B cell (primary cell): ENCODE measurements at regions of chr1 and their contacts with region 1.

Region 1: DNA sequence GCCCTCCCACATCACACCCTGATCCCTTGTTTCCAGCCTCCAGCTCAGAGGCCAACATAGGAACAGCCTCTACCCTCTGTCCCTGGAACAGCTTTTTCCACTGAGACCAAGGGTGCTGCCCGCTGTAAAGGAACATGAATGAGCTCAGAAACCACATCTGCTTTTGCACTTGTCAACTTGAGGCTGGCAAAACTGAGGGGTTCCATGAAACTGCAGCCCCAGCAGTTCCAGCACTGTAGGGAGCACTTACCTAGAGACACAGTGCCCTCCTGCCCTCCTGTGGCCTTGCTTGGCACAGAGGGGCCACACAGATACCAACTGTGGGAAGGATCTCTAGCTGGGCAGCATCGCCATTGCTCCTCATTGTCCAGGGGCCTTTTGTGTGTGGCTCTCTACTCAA is 51.7 kb downstream of the ITPKB start:
- DNase-seq: peak; percentile 73
- ATAC-seq: peak; percentile 44
- H3K4me3 ChIP-seq: no peak overlapping the region
- H3K4me3 Mint-ChIP-seq: peak overlapping the region; percentile 74
- H3K27ac ChIP-seq: no peak overlapping the region
- H3K27ac Mint-ChIP-seq: peak overlapping the region; percentile 91
- H3K4me1 ChIP-seq: peaks cover 78 to 93% of the 10 kb centered on the region in 2 donors
- H3K4me1 Mint-ChIP-seq: peaks cover 97% of the 10 kb centered on the region
- H3K27me3 ChIP-seq: no peaks in the 10 kb centered on the region
- H3K27me3 Mint-ChIP-seq: no peaks in the 10 kb centered on the region
- CTCF ChIP-seq: peak; percentile 52

Region 2: GRCh38 chr1:226626577-226626956 is 60.9 kb before region 1 on chr1:
- CTCF ChIA-PET with region 1: interaction called, 88 read pairs
- POLR2A ChIA-PET with region 1: no interaction called
- intact Hi-C with region 1: loop called (anchors 1 kb)
- DNase-seq: peak; percentile 85
- ATAC-seq: peak; percentile 97
- H3K4me3 ChIP-seq: peak overlapping the region in 4 of 5 experiments; percentile 9 to 46 (median 32)
- H3K4me3 Mint-ChIP-seq: peak overlapping the region; percentile 56
- H3K27ac ChIP-seq: no peak overlapping the region
- H3K27ac Mint-ChIP-seq: peak overlapping the region; percentile 21
- H3K4me1 ChIP-seq: peaks cover 20 to 21% of the 10 kb centered on the region in 2 donors
- H3K4me1 Mint-ChIP-seq: peaks cover 37% of the 10 kb centered on the region
- H3K27me3 ChIP-seq: no peaks in the 10 kb centered on the region
- H3K27me3 Mint-ChIP-seq: no peaks in the 10 kb centered on the region
- CTCF ChIP-seq: peak; percentile 95

Region 3: GRCh38 chr1:226642876-226643576 is 44.4 kb before region 1 on chr1:
- CTCF ChIA-PET with region 1: interaction called, 78 read pairs
- POLR2A ChIA-PET with region 1: interaction called, 4 read pairs
- intact Hi-C with region 1: loop called (anchors 2 kb)
- DNase-seq: peak; percentile 62
- ATAC-seq: peak; percentile 48
- H3K4me3 ChIP-seq: no peak overlapping the region
- H3K4me3 Mint-ChIP-seq: peak overlapping the region; percentile 81
- H3K27ac ChIP-seq: peak overlapping the region; percentile 62 to 68
- H3K27ac Mint-ChIP-seq: peak overlapping the region; percentile 91
- H3K4me1 ChIP-seq: peaks cover 57 to 70% of the 10 kb centered on the region in 2 donors
- H3K4me1 Mint-ChIP-seq: peaks cover 71% of the 10 kb centered on the region
- H3K27me3 ChIP-seq: no peaks in the 10 kb centered on the region
- H3K27me3 Mint-ChIP-seq: no peaks in the 10 kb centered on the region
- CTCF ChIP-seq: no peak

Region 4: GRCh38 chr1:226649780-226650179 is 37.6 kb before region 1 on chr1:
- CTCF ChIA-PET with region 1: interaction called, 78 read pairs
- POLR2A ChIA-PET with region 1: no interaction called
- intact Hi-C with region 1: no loop called
- DNase-seq: no peak
- ATAC-seq: no peak
- H3K4me3 ChIP-seq: no peak overlapping the region
- H3K4me3 Mint-ChIP-seq: no peak overlapping the region
- H3K27ac ChIP-seq: no peak overlapping the region
- H3K27ac Mint-ChIP-seq: peak overlapping the region; percentile 46
- H3K4me1 ChIP-seq: peaks cover 15 to 21% of the 10 kb centered on the region in 2 donors
- H3K4me1 Mint-ChIP-seq: peaks cover 45% of the 10 kb centered on the region
- H3K27me3 ChIP-seq: no peaks in the 10 kb centered on the region
- H3K27me3 Mint-ChIP-seq: no peaks in the 10 kb centered on the region
- CTCF ChIP-seq: peak; percentile 35

Region 5: DNA sequence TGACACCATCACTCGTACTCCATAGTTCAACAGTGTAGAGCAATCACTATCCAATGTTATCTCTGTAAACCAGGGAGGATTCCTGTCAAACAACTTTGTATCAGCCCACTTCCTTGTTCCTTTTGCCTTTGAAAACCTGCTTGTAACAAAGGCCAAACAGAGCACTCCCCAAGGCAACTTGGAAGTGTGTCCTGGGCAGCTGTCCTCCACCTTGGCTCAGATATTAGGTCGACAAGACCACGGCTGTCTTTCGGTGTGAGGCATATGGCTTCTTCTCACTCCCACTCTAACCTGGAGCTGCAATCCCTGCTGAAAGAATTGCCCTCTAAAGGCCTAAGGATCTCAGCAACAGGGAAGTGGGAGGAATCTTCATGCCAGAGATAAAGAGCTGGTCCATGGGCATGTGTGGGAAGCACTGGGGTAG is 15.1 kb before region 1 on chr1:
- CTCF ChIA-PET with region 1: interaction called, 29 read pairs
- POLR2A ChIA-PET with region 1: interaction called, 4 read pairs
- intact Hi-C with region 1: loop called (anchors 1 kb)
- DNase-seq: no peak
- ATAC-seq: no peak
- H3K4me3 ChIP-seq: no peak overlapping the region
- H3K4me3 Mint-ChIP-seq: peak overlapping the region; percentile 94
- H3K27ac ChIP-seq: peak overlapping the region in 1 of 2 donors; percentile 94
- H3K27ac Mint-ChIP-seq: peak overlapping the region; percentile 71
- H3K4me1 ChIP-seq: peaks cover 59 to 73% of the 10 kb centered on the region in 2 donors
- H3K4me1 Mint-ChIP-seq: peaks cover 89% of the 10 kb centered on the region
- H3K27me3 ChIP-seq: no peaks in the 10 kb centered on the region
- H3K27me3 Mint-ChIP-seq: no peaks in the 10 kb centered on the region
- CTCF ChIP-seq: no peak

Region 6: DNA sequence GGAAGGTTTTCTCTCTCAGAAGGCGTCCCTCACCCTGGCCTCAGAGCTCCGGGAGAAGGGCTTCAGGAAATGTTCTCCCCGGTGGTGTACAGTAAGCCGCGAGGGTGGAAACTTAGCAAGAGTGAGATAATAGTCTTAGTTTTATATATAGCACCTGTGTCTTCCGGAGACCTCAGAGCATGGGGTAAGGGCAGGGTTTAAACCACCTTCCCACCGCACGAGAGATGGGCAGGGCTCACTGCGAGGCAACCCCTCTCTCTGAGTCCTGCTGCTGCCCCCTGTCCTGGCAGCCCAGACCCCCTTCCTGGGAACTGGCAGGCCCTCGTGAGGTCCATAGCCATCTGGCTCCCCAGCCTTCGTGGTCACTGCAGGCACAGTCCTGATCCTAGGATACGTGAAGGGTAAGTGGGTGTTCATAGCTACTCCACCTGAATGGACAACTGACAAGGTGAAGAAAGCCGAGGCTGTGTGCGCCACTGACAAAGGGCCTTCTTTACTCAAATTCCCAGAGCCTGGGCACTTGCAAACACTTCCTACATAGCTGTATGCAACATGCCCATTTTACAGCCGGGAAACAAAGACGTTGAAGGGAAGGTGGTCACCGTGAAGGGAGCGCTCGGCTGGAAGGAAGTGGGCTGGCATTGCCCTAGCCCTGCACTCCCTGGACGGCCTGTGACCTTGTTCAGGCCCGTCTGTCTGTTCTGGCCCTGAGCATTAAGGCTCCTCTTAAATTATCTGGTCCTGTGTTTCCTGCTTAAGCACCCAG is 24.7 kb after region 1 on chr1:
- CTCF ChIA-PET with region 1: interaction called, 13 read pairs
- POLR2A ChIA-PET with region 1: no interaction called
- intact Hi-C with region 1: no loop called
- DNase-seq: peak; percentile 50
- ATAC-seq: peak; percentile 75
- H3K4me3 ChIP-seq: peak overlapping the region in 4 of 5 experiments; percentile 18 to 57 (median 22)
- H3K4me3 Mint-ChIP-seq: peak overlapping the region; percentile 56
- H3K27ac ChIP-seq: peak overlapping the region; percentile 70 to 84
- H3K27ac Mint-ChIP-seq: peak overlapping the region; percentile 76
- H3K4me1 ChIP-seq: peaks cover 59 to 73% of the 10 kb centered on the region in 2 donors
- H3K4me1 Mint-ChIP-seq: peaks cover 78% of the 10 kb centered on the region
- H3K27me3 ChIP-seq: no peaks in the 10 kb centered on the region
- H3K27me3 Mint-ChIP-seq: no peaks in the 10 kb centered on the region
- CTCF ChIP-seq: no peak

Region 7: GRCh38 chr1:227612658-227613057 is 925.2 kb after region 1 on chr1:
- CTCF ChIA-PET with region 1: no interaction called
- POLR2A ChIA-PET with region 1: no interaction called
- intact Hi-C with region 1: no loop called
- DNase-seq: no peak
- ATAC-seq: no peak
- H3K4me3 ChIP-seq: no peak overlapping the region
- H3K4me3 Mint-ChIP-seq: no peak overlapping the region
- H3K27ac ChIP-seq: no peak overlapping the region
- H3K27ac Mint-ChIP-seq: no peak overlapping the region
- H3K4me1 ChIP-seq: no peaks in the 10 kb centered on the region
- H3K4me1 Mint-ChIP-seq: peaks cover 3% of the 10 kb centered on the region
- H3K27me3 ChIP-seq: no peaks in the 10 kb centered on the region
- H3K27me3 Mint-ChIP-seq: no peaks in the 10 kb centered on the region
- CTCF ChIP-seq: no peak